Activated CD4-positive, alpha-beta T cell treated with anti-CD3 and anti-CD28 coated beads for 36 hours (primary cell): ENCODE measurements at regions of chr19 and their contacts with region 1.

Region 1: DNA sequence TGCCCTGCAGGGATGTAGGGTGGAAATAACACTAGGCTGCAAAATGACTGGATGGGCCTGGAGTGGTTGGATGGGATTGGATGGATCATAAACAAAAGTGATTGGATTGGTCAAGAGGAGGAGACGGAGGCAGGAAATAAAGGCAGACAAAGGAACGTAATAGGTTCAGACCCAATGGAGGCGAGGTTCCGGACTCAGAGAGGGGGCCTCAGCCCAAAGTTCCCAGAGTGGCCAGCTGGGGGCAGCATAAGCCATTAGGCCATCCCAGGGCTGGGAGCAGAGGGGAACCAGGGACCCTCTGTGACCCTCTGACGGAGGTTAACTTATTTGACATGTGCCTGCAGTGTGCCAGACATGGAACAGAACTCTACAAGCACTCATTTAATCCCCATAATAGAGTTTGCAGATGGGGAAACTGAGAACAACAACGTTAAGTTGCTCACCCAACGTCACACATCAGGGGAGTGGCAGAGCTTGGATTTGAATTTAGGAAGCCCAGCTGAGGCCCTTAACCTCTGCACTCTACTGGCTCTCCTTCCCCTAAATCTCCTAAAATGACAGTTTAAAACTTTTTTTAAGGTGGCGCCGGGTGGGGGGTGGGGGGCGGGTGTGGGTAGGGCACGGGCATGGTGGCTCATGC is 15.3 kb upstream of the MAP1S start:
- DNase-seq: peak; percentile 85
- ATAC-seq: peak; percentile 96
- H3K4me3 Mint-ChIP-seq: no peak overlapping the region
- H3K27ac Mint-ChIP-seq: no peak overlapping the region
- H3K4me1 Mint-ChIP-seq: no peaks in the 10 kb centered on the region
- H3K27me3 Mint-ChIP-seq: peaks cover 5% of the 10 kb centered on the region

Region 2: GRCh38 chr19:17766543-17767131 is 62.7 kb after region 1 on chr19:
- CTCF ChIA-PET with region 1: interaction called, 23 read pairs
- POLR2A ChIA-PET with region 1: no interaction called
- intact Hi-C with region 1: loop called in 1 of 2 experiments (anchors 1 kb)
- DNase-seq: peak; percentile 71
- ATAC-seq: peak; percentile 61
- H3K4me3 Mint-ChIP-seq: no peak overlapping the region
- H3K27ac Mint-ChIP-seq: no peak overlapping the region
- H3K4me1 Mint-ChIP-seq: peaks cover 5% of the 10 kb centered on the region
- H3K27me3 Mint-ChIP-seq: no peaks in the 10 kb centered on the region

Region 3: GRCh38 chr19:17775245-17775916 is 71.4 kb after region 1 on chr19:
- CTCF ChIA-PET with region 1: interaction called, 8 read pairs
- POLR2A ChIA-PET with region 1: no interaction called
- intact Hi-C with region 1: loop called in 1 of 2 experiments (anchors 2 kb)
- DNase-seq: peak; percentile 58
- ATAC-seq: no peak
- H3K4me3 Mint-ChIP-seq: no peak overlapping the region
- H3K27ac Mint-ChIP-seq: no peak overlapping the region
- H3K4me1 Mint-ChIP-seq: peaks cover 10% of the 10 kb centered on the region
- H3K27me3 Mint-ChIP-seq: no peaks in the 10 kb centered on the region

Region 4: GRCh38 chr19:17784201-17785008 is 80.5 kb after region 1 on chr19:
- CTCF ChIA-PET with region 1: interaction called, 9 read pairs
- POLR2A ChIA-PET with region 1: no interaction called
- intact Hi-C with region 1: loop called (anchors 1 to 2 kb)
- DNase-seq: peak; percentile 87
- ATAC-seq: peak; percentile 73
- H3K4me3 Mint-ChIP-seq: no peak overlapping the region
- H3K27ac Mint-ChIP-seq: no peak overlapping the region
- H3K4me1 Mint-ChIP-seq: peaks cover 6% of the 10 kb centered on the region
- H3K27me3 Mint-ChIP-seq: no peaks in the 10 kb centered on the region

Region 5: GRCh38 chr19:17854061-17854460 is 150.1 kb after region 1 on chr19:
- CTCF ChIA-PET with region 1: interaction called, 12 read pairs
- POLR2A ChIA-PET with region 1: no interaction called
- intact Hi-C with region 1: loop called (anchors 1 kb)
- DNase-seq: no peak
- ATAC-seq: no peak
- H3K4me3 Mint-ChIP-seq: no peak overlapping the region
- H3K27ac Mint-ChIP-seq: no peak overlapping the region
- H3K4me1 Mint-ChIP-seq: peaks cover 34% of the 10 kb centered on the region
- H3K27me3 Mint-ChIP-seq: no peaks in the 10 kb centered on the region